ENCODE measurements at regions of chr18 and their contacts with region 1.

Region 1: DNA sequence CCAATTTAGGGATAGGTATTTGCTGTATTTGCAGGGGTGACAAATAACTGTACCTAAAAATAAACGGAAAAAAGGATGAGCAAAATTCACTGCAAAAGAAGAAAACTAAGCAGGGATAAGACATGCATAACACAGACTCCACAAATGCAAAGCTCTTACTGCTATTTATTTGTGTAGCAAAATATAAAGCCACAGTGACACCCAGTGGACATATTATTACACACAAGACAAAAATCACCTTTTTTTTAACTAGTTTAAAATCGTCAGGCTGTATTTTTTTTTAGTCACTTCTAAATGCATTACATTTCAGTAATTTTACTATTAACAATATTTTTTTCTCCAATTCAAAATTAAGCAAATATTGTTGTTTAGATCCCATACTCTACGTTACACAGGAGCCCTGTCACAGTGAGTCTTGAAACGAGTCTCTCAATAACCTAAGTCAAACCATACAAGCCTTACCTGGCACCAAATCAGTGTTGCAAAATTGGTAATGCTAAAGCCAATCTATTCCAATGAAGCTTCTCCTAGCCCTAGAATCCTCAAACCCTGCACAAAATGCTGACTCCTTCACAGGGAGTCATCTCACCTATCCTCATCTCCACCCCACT is 23.7 kb downstream of the METTL4 start:
- H3K4me3 Mint-ChIP-seq: no peak overlapping the region
- H3K27ac Mint-ChIP-seq: no peak overlapping the region
- H3K4me1 Mint-ChIP-seq: no peaks in the 10 kb centered on the region
- H3K27me3 Mint-ChIP-seq: no peaks in the 10 kb centered on the region

Region 2: GRCh38 chr18:2337552-2338141 is 209.9 kb before region 1 on chr18:
- intact Hi-C with region 1: loop called (anchors 1 kb)
- H3K4me3 Mint-ChIP-seq: no peak overlapping the region
- H3K27ac Mint-ChIP-seq: no peak overlapping the region
- H3K4me1 Mint-ChIP-seq: no peaks in the 10 kb centered on the region
- H3K27me3 Mint-ChIP-seq: peaks cover 2% of the 10 kb centered on the region

Measured in dendritic cell treated with granulocyte-macrophage colony-stimulating factor and Interleukin-4, amounts not matched to agents 40 ng/mL and 50 ng/mL, for 4 days (primary cell).